ENCODE measurements at regions of chr1 and their contacts with region 1.

Region 1: GRCh38 chr1:176745945-176746344 is 283.0 kb downstream of the PAPPA2 start:
- DNase-seq: peak in 1 of 2 experiments; percentile 9
- H3K4me3 ChIP-seq: no peak overlapping the region
- H3K4me3 Mint-ChIP-seq: no peak overlapping the region
- H3K27ac Mint-ChIP-seq: no peak overlapping the region
- H3K4me1 ChIP-seq: no peaks in the 10 kb centered on the region
- H3K4me1 Mint-ChIP-seq: no peaks in the 10 kb centered on the region
- H3K27me3 ChIP-seq: no peaks in the 10 kb centered on the region
- H3K27me3 Mint-ChIP-seq: peaks cover 3% of the 10 kb centered on the region
- CTCF ChIP-seq: peak in 1 of 2 experiments; percentile 19

Region 2: DNA sequence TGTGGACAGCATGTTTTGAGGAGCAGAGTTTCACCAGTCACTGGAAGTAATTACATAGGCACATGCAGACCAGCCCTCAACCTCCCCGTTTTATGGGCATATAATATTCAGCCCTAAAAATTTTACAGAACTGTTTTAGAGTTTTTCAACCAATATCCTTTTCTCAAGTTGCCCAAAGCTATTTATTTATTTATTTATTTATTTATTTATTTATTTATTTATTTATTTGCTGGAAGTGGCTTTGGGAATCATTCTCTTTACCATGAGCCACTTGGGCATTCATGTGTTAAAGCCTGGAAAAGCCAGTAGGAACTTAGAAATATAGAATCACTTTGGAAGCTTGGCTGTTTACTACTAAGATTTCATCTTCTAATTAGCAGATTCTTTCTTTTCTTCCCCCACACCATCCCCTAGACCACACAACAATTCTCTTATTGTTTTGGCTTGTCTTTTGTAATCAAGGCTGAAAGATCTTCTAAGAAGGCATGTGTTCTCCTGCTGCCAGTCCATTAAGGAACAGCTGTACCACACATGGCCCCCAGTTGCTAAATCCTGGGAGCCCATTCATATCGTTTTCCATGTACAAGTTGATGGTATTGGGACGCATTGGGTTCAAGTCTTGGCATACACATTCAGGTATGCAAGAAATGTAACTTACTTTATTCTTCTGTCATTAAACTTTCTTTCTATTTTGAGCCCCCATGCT is 63.0 kb before region 1 on chr1:
- CTCF ChIA-PET with region 1: no interaction called
- POLR2A ChIA-PET with region 1: no interaction called
- intact Hi-C with region 1: no loop called
- DNase-seq: no peak
- H3K4me3 ChIP-seq: no peak overlapping the region
- H3K4me3 Mint-ChIP-seq: no peak overlapping the region
- H3K27ac Mint-ChIP-seq: no peak overlapping the region
- H3K4me1 ChIP-seq: no peaks in the 10 kb centered on the region
- H3K4me1 Mint-ChIP-seq: no peaks in the 10 kb centered on the region
- H3K27me3 ChIP-seq: no peaks in the 10 kb centered on the region
- H3K27me3 Mint-ChIP-seq: peaks cover 20% of the 10 kb centered on the region
- CTCF ChIP-seq: no peak

Region 3: DNA sequence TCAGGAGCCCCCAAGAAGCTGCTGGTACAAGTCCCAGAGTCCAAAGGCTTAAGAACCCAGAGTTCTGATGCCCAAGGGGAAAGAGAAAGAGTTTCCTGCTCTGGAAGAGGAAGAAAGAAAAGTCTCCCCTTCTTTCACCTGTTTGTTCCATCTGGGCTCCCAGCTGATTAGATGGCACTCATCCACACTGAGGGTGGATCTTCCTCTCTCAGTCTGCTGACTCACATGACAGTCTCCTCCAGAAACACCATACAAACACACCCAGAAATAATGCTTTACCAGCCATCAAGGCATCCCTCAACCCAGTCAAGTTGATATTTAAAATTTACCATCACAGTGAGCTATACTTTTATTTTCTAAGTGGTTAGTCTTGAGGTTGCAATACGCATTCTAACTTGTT is 25.1 kb before region 1 on chr1:
- CTCF ChIA-PET with region 1: no interaction called
- POLR2A ChIA-PET with region 1: no interaction called
- intact Hi-C with region 1: loop called (anchors 2 kb)
- DNase-seq: no peak
- H3K4me3 ChIP-seq: no peak overlapping the region
- H3K4me3 Mint-ChIP-seq: no peak overlapping the region
- H3K27ac Mint-ChIP-seq: no peak overlapping the region
- H3K4me1 ChIP-seq: no peaks in the 10 kb centered on the region
- H3K4me1 Mint-ChIP-seq: no peaks in the 10 kb centered on the region
- H3K27me3 ChIP-seq: no peaks in the 10 kb centered on the region
- H3K27me3 Mint-ChIP-seq: peaks cover 8% of the 10 kb centered on the region
- CTCF ChIP-seq: no peak